HCT116 (cell line): ENCODE measurements at regions of chr2 and their contacts with region 1.

Region 1: GRCh38 chr2:127197475-127198385 is 22.4 kb downstream of the CYP27C1 start:
- DNase-seq: peak; percentile 63
- ATAC-seq: peak; percentile 99
- H3K4me3 ChIP-seq: peak overlapping the region; percentile 25 to 53
- H3K27ac ChIP-seq: no peak overlapping the region
- H3K4me1 ChIP-seq: peaks cover 0 to 11% of the 10 kb centered on the region in 2 experiments; a peak in 2 of 4 replicates
- H3K27me3 ChIP-seq: no peaks in the 10 kb centered on the region
- CTCF ChIP-seq: peak; percentile 80 to 90 (median 84); a peak in 5 of 6 replicates
- POLR2A ChIP-seq: no peak
- RAD21 ChIP-seq: peak; percentile 91

Region 2: DNA sequence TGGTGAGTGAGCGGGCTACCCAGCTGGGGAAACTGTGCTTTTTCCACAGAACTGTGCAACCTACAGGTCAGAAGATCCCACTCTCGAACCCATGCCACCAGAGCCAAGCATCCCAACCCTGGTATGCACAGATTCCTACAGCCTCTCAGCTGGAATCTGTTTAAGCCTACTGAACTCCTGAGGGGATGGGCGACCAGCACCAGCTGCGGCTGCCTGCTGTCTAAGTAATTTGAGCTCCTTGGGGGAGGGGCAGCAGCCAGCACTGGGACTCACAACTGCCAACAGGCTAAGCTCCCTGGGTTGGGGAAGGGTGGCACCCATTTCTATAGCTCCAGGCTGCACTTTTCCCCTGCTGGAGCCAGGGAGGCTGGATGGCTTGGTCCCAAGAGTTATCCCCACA is 10.6 kb after region 1 on chr2:
- CTCF ChIA-PET with region 1: interaction called, 13 read pairs
- POLR2A ChIA-PET with region 1: no interaction called
- RAD21 ChIA-PET with region 1: no interaction called
- intact Hi-C with region 1: no loop called
- DNase-seq: no peak
- ATAC-seq: no peak
- H3K4me3 ChIP-seq: no peak overlapping the region
- H3K27ac ChIP-seq: no peak overlapping the region
- H3K4me1 ChIP-seq: peaks cover 0 to 5% of the 10 kb centered on the region in 2 experiments; a peak in 1 of 4 replicates
- H3K27me3 ChIP-seq: no peaks in the 10 kb centered on the region
- CTCF ChIP-seq: no peak
- POLR2A ChIP-seq: no peak
- RAD21 ChIP-seq: no peak

Region 3: DNA sequence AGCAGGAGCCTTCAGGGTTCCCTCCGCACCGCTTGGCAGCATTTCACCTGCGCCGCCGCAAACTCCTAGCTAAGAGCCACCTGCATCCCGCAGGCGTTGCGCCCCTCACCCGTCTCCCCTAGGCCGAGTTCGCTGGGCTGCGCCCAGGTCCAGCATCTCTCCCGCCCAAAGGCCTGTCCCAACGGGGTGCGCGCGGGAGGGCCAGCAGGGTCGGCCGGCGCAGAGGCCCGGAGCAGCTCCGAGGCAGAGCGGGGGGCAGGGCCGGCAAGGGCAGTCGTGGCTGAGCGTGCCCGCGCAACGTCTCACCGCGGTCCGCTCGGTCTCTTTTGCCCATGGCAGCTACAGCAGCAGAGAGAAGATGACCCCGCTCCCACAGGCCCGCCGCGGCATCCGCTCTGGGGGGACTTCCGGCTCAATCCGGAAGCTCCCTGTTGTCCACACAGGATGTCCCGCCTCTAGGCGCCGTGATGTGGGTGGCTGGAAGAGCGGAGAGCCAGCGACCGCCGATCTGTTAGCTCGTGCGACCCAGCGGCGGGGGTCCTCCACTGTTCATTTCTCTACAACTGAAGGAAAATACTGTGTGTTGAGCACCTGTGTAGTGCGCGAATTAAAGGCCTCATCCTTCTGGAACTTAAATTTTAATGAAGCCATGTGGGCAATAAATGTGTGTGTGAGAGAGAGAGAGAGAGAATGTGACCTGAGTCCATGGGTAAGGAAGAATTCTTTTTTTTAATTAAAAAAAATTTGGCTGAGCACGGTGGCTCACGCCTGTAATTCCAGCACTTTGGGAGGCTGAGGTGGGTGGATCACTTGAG is 96.2 kb after region 1 on chr2 and contains the start of gene ERCC3:
- CTCF ChIA-PET with region 1: interaction called, 12 read pairs
- POLR2A ChIA-PET with region 1: interaction called, 4 read pairs
- RAD21 ChIA-PET with region 1: interaction called in 1 of 2 experiments, 6 read pairs
- intact Hi-C with region 1: loop called (anchors 2 kb)
- DNase-seq: peak; percentile 49
- ATAC-seq: peak; percentile 94
- H3K4me3 ChIP-seq: peak within 1 kb of the TSS; percentile 87 to 93
- H3K27ac ChIP-seq: peak within 1 kb of the TSS; percentile 82
- H3K4me1 ChIP-seq: peaks cover 10 to 14% of the 10 kb centered on the region in 2 experiments
- H3K27me3 ChIP-seq: no peaks in the 10 kb centered on the region
- CTCF ChIP-seq: no peak
- POLR2A ChIP-seq: peak; percentile 94
- RAD21 ChIP-seq: peak; percentile 11; the same call in 1 of the 2 replicates
- total RNA-seq, gene ERCC3: 52.7 TPM

Region 4: DNA sequence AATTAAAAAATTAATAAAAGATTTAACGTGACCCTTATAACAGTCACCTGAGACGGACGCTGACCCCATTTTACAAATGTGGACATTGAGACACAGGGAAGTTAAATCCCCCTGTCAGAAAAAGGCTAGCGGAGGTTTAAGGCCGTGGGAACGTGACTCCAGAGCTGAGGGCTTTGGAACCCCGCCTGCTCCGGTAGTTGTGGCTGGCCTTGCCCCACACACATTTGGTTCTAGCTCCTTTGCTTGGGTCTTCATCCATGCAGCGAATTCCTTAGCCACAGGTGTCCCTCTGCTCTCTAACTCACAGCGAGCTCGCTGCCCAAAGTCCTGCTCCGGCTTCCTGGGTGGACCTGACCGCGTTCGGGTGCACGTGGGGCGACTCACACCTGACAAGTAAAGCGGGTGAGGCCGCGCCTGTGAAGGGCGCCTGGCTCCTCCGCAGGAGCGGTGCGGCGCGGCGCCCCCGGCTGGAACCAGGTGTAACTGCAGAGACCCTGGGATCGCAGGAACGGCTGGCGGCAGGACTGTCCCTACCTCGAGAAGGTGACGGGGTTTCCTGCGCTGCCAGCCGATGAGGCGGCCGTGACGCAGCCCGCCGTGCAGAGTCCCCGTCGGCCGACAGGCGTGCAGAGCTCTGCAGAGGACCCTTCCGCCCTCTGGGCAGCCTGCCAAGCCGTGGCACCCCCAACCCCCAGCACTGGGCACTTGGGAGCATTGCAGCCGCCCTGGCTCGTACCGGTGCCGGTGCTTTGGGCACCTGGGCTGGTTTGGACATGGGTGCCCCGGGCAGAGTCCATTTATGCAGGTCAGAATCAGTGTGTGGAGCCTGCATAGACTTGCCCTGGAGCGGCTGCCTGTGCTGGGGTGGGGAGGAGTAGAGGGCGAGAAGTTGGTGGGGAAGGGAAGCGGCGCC is 218.1 kb after region 1 on chr2:
- CTCF ChIA-PET with region 1: interaction called, 22 read pairs
- POLR2A ChIA-PET with region 1: no interaction called
- RAD21 ChIA-PET with region 1: interaction called in 1 of 2 experiments, 4 read pairs
- intact Hi-C with region 1: loop called (anchors 1 kb)
- DNase-seq: peak; percentile 61
- ATAC-seq: peak; percentile 95
- H3K4me3 ChIP-seq: peak overlapping the region; percentile 34 to 53
- H3K27ac ChIP-seq: no peak overlapping the region
- H3K4me1 ChIP-seq: peaks cover 17 to 29% of the 10 kb centered on the region in 2 experiments
- H3K27me3 ChIP-seq: no peaks in the 10 kb centered on the region; the same call in 1 of the 2 replicates
- CTCF ChIP-seq: peak; percentile 75 to 79 (median 77)
- POLR2A ChIP-seq: no peak
- RAD21 ChIP-seq: peak; percentile 80

Region 5: GRCh38 chr2:127517465-127517864 is 319.7 kb after region 1 on chr2:
- CTCF ChIA-PET with region 1: no interaction called
- POLR2A ChIA-PET with region 1: no interaction called
- RAD21 ChIA-PET with region 1: no interaction called
- intact Hi-C with region 1: no loop called
- DNase-seq: no peak
- ATAC-seq: no peak
- H3K4me3 ChIP-seq: no peak overlapping the region
- H3K27ac ChIP-seq: no peak overlapping the region
- H3K4me1 ChIP-seq: no peaks in the 10 kb centered on the region
- H3K27me3 ChIP-seq: no peaks in the 10 kb centered on the region
- CTCF ChIP-seq: no peak
- POLR2A ChIP-seq: no peak
- RAD21 ChIP-seq: no peak

Region 6: DNA sequence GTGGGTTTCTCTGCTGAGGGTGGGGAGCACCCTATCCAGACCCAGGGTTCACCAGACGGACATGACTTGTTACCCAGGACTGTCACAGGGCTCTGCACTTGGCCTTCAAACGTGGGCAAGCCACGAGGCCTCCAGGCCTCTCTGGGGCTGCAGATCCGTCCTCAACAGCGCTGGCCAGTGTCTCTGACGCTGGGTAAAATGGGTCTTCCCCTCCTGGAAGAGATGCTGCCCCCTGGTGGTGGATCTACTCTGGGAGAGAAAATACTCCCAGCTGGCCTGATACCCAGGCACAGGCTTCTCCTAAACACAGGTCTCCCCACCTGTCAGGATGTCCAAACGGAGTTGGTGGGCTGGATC is 451.9 kb after region 1 on chr2:
- CTCF ChIA-PET with region 1: interaction called, 17 read pairs
- POLR2A ChIA-PET with region 1: no interaction called
- RAD21 ChIA-PET with region 1: no interaction called
- intact Hi-C with region 1: loop called (anchors 1 kb)
- DNase-seq: peak; percentile 72
- ATAC-seq: peak; percentile 84
- H3K4me3 ChIP-seq: no peak overlapping the region
- H3K27ac ChIP-seq: no peak overlapping the region
- H3K4me1 ChIP-seq: peaks cover 9 to 31% of the 10 kb centered on the region in 2 experiments
- H3K27me3 ChIP-seq: no peaks in the 10 kb centered on the region
- CTCF ChIP-seq: peak; percentile 85 to 90 (median 87)
- POLR2A ChIP-seq: no peak
- RAD21 ChIP-seq: peak; percentile 81